Activated CD8-positive, alpha-beta T cell treated with anti-CD3 and anti-CD28 coated beads for 36 hours (primary cell): ENCODE measurements at regions of chr12 and their contacts with region 1.

Region 1: GRCh38 chr12:108664338-108665258 is 30.9 kb upstream of the SELPLG start:
- DNase-seq: peak; percentile 92
- ATAC-seq: peak; percentile 100
- H3K4me3 Mint-ChIP-seq: peak overlapping the region; percentile 31
- H3K27ac Mint-ChIP-seq: peak overlapping the region; percentile 79
- H3K4me1 Mint-ChIP-seq: peaks cover 19% of the 10 kb centered on the region
- H3K27me3 Mint-ChIP-seq: no peaks in the 10 kb centered on the region
- CTCF ChIP-seq: peak; percentile 96

Region 2: DNA sequence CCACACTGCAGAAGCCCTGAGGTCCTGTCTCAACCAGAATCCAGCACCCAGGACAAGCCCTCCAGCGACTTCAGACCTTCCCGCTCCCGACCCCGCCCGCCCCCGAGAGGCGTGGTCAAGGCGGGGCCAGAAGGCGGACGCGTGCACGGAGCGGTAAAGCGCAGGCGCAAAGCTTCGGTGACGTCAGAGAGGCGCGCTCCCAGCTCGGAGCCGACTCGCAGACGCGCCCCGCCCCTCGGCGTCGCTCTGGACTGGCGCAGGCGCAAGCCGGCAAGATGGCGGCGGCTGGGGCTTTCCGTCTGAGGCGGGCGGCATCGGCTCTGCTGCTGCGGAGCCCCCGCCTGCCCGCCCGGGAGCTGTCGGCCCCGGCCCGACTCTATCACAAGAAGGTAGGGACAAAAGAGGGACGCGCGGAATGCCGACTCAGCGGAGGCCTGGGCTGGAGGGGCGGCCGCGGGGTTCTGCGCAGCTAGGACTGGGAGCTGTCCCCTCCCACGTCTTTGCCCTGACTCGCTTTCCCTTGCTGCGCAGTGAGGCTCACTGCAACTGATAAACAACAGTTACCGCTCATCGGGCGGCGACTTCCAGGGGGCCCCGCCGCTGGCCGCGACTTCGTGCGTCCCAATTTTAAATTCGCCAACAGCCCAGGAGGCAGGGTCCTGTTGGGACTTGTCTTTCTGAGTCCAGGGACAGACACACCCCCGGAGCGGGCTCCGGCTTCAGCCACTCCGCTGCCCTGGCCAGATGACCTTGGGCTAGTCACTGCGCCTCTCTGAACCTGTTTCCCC is 102.1 kb before region 1 on chr12 and contains the start of gene ISCU:
- CTCF ChIA-PET with region 1: interaction called, 30 read pairs
- POLR2A ChIA-PET with region 1: interaction called, 3 read pairs
- intact Hi-C with region 1: no loop called
- DNase-seq: peak; percentile 97
- ATAC-seq: peak; percentile 76
- H3K4me3 Mint-ChIP-seq: peak within 1 kb of the TSS; percentile 99
- H3K27ac Mint-ChIP-seq: peak within 1 kb of the TSS; percentile 100
- H3K4me1 Mint-ChIP-seq: peaks cover 55% of the 10 kb centered on the region
- H3K27me3 Mint-ChIP-seq: no peaks in the 10 kb centered on the region
- CTCF ChIP-seq: no peak
- total RNA-seq, gene ISCU: 69.4 to 70.5 TPM

Region 3: GRCh38 chr12:108597559-108598471 is 66.8 kb before region 1 on chr12 and contains the start of gene TMEM119:
- CTCF ChIA-PET with region 1: no interaction called
- POLR2A ChIA-PET with region 1: no interaction called
- intact Hi-C with region 1: no loop called
- DNase-seq: no peak
- ATAC-seq: no peak
- H3K4me3 Mint-ChIP-seq: no peak within 1 kb of the TSS
- H3K27ac Mint-ChIP-seq: no peak within 1 kb of the TSS
- H3K4me1 Mint-ChIP-seq: no peaks in the 10 kb centered on the region
- H3K27me3 Mint-ChIP-seq: no peaks in the 10 kb centered on the region
- CTCF ChIP-seq: no peak
- total RNA-seq, gene TMEM119: not detected

Region 4: DNA sequence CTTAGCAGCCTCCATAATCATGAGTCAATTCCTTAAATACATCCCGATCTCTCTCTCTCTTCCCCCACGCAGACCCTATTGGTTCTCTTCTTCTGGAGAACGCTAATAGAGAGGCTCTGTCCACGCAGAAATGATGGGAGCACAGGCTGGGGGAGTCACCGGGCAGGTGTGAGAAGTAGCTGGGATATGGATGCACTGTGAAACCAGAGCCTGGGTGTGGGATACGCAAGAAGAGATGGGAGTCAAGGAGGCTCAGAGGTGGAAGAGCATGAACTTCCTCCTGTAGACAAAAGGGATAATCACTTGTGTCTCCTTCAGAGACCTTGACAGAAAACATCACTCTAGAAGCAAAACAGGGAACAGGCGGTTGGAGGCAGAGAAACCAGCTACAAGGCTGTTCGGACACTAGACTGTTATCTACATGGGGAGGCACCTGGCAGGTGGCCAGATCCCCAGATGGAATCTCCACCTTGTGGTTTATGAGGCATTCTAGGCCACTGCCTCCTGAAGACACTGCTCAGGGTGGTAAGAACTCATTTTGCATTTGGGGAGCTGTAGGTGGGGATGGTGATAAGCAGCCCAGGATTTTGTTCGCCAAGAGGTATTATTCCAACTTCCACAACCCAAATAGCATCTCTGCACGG is 23.7 kb before region 1 on chr12:
- CTCF ChIA-PET with region 1: interaction called, 25 read pairs
- POLR2A ChIA-PET with region 1: interaction called, 6 read pairs
- intact Hi-C with region 1: no loop called
- DNase-seq: no peak
- ATAC-seq: no peak
- H3K4me3 Mint-ChIP-seq: no peak overlapping the region
- H3K27ac Mint-ChIP-seq: no peak overlapping the region
- H3K4me1 Mint-ChIP-seq: peaks cover 30% of the 10 kb centered on the region
- H3K27me3 Mint-ChIP-seq: no peaks in the 10 kb centered on the region
- CTCF ChIP-seq: no peak

Region 5: DNA sequence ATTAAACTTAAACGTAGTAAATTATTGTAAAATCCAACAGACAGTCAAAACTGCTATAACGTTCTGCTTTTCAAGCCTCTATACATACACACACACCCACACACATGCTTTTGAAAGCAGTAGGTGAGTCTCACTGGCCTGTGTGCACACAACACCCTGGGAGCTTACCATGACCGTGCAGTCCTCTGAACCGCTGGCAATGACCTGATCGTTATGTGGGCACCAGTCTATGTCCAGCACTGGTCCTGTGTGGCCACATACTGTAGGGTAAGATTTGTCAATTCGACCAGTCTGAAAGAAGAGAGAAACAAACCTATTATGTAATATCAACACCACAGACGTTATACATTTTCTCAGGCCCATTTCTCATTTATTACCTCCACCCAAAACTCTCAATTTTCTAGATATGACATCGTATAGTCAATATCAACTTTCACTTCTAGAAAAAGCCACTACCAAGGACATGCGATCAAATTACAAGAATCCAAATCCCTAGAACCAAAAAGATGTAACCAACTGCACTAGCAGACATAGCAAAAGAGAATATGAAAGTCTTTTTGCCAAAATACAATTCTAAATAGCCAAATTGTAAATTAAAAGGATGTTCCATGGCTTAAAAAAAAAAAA is 13.6 kb after region 1 on chr12:
- CTCF ChIA-PET with region 1: interaction called, 16 read pairs
- POLR2A ChIA-PET with region 1: no interaction called
- intact Hi-C with region 1: no loop called
- DNase-seq: no peak
- ATAC-seq: peak; percentile 34
- H3K4me3 Mint-ChIP-seq: no peak overlapping the region
- H3K27ac Mint-ChIP-seq: no peak overlapping the region
- H3K4me1 Mint-ChIP-seq: peaks cover 10% of the 10 kb centered on the region
- H3K27me3 Mint-ChIP-seq: no peaks in the 10 kb centered on the region
- CTCF ChIP-seq: no peak

Region 6: DNA sequence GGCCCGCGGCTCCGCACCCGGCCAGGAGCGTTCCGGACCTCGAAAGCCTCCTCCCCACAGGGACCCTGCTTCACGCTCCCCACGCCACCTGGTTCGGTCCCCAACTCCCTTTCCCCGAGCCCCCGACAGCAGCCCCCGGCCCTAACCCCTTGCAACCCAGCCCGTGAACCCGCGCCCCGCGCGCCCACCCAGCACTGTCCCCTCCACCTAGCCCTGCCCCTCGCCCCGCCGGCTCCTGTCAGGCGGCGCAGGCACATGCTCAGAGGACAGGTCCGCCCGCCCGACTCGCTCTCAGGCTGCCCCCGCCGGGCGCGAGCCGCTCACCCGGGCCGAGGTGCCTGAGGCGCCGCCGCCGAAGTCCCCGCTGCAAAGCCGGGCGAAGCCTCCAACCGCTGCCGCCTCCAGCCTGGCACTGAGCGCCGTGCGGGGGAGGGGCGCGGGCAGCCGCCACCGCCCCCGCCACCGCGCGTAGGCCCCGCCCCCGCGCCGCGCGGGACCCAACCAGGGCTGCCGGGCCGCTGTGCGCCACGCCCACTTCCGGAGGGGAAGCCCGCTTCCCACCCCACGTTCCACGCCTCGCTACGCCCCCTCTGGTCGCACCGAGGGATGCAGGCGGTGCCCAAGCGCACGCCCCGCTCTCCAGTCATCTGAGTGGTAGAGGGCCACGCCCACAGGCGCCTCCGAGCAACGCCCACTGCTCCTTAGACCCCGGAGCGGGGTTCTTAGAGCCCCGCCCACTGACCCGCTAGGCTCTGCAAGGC is 66.7 kb after region 1 on chr12 and contains the start of gene CORO1C:
- CTCF ChIA-PET with region 1: interaction called, 20 read pairs
- POLR2A ChIA-PET with region 1: interaction called, 4 read pairs
- intact Hi-C with region 1: loop called (anchors 10 kb)
- DNase-seq: peak; percentile 97
- ATAC-seq: peak; percentile 87
- H3K4me3 Mint-ChIP-seq: peak within 1 kb of the TSS; percentile 92
- H3K27ac Mint-ChIP-seq: peak within 1 kb of the TSS; percentile 93
- H3K4me1 Mint-ChIP-seq: peaks cover 32% of the 10 kb centered on the region
- H3K27me3 Mint-ChIP-seq: no peaks in the 10 kb centered on the region
- CTCF ChIP-seq: peak; percentile 86
- total RNA-seq, gene CORO1C: 90.1 to 98.9 TPM

Region 7: GRCh38 chr12:108786450-108786849 is 121.9 kb after region 1 on chr12:
- CTCF ChIA-PET with region 1: interaction called, 10 read pairs
- POLR2A ChIA-PET with region 1: interaction called, 4 read pairs
- intact Hi-C with region 1: no loop called
- DNase-seq: no peak
- ATAC-seq: no peak
- H3K4me3 Mint-ChIP-seq: no peak overlapping the region
- H3K27ac Mint-ChIP-seq: no peak overlapping the region
- H3K4me1 Mint-ChIP-seq: no peaks in the 10 kb centered on the region
- H3K27me3 Mint-ChIP-seq: no peaks in the 10 kb centered on the region
- CTCF ChIP-seq: no peak

Region 8: GRCh38 chr12:108950991-108951739 is 286.6 kb after region 1 on chr12:
- CTCF ChIA-PET with region 1: interaction called, 20 read pairs
- POLR2A ChIA-PET with region 1: no interaction called
- intact Hi-C with region 1: loop called (anchors 2 kb)
- DNase-seq: peak; percentile 83
- ATAC-seq: peak; percentile 90
- H3K4me3 Mint-ChIP-seq: no peak overlapping the region
- H3K27ac Mint-ChIP-seq: no peak overlapping the region
- H3K4me1 Mint-ChIP-seq: peaks cover 3% of the 10 kb centered on the region
- H3K27me3 Mint-ChIP-seq: peaks cover 4% of the 10 kb centered on the region
- CTCF ChIP-seq: peak; percentile 88